ENCODE measurements at regions of chr14 and their contacts with region 1.

Region 1: DNA sequence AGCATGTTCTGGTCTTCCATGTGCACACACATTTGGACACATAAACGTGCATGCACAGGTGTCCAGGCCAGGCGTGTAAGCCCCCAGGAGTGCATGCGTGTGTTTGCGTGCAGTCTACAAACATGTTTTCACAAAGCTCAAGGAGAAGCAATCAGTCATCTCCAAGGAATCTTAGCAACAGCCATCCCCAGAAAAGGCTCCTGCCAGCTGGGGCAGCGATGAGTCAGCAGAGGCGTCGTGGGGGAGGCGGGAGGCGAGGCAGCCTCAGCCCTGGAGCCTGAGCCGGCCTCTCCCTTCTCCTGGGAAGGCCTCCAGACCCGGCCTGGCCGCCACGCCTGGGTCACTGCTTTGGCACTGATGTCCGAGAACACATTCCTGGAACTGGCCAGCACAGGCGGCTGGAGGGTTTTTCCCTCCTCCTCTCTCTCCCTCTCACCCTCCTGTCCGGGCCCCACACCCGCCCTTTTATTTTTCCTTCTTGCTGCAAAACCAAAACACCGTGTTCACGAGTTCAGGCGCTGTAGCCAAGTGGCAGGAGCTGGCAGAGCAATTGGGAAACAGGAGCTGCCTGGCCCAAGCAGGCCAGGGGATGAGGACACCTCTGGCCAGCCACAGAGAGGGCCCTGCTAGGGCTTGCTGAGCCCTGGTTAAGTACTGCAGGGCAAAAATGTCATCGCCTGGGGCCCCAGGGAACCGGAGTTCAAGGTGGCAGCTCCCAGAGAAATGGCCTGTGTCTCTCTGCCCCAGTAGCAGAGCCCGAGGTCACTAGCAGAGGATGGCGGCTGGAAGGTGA is 92.7 kb downstream of the LRRC74A start:
- DNase-seq: no peak
- H3K4me3 ChIP-seq: no peak overlapping the region
- H3K4me3 Mint-ChIP-seq: peak overlapping the region in 1 of 8 donors; percentile 15
- H3K27ac ChIP-seq: no peak overlapping the region
- H3K27ac Mint-ChIP-seq: peak overlapping the region in 2 of 7 donors; percentile 46 to 57
- H3K4me1 ChIP-seq: peaks cover 32% of the 10 kb centered on the region
- H3K4me1 Mint-ChIP-seq: peaks cover 18 to 59% (median 43%) of the 10 kb centered on the region in 4 donors
- H3K27me3 ChIP-seq: no peaks in the 10 kb centered on the region
- H3K27me3 Mint-ChIP-seq: no peaks in the 10 kb centered on the region

Region 2: GRCh38 chr14:76931631-76932402 is 12.9 kb after region 1 on chr14:
- CTCF ChIA-PET with region 1: interaction called, 39 read pairs
- POLR2A ChIA-PET with region 1: interaction called, 22 read pairs
- intact Hi-C with region 1: no loop called
- DNase-seq: no peak
- H3K4me3 ChIP-seq: no peak overlapping the region
- H3K4me3 Mint-ChIP-seq: peak overlapping the region in 6 of 8 donors; percentile 37 to 79 (median 61)
- H3K27ac ChIP-seq: no peak overlapping the region
- H3K27ac Mint-ChIP-seq: peak overlapping the region; percentile 83 to 97 (median 94)
- H3K4me1 ChIP-seq: peaks cover 61% of the 10 kb centered on the region
- H3K4me1 Mint-ChIP-seq: peaks cover 55 to 70% (median 61%) of the 10 kb centered on the region in 4 donors
- H3K27me3 ChIP-seq: no peaks in the 10 kb centered on the region
- H3K27me3 Mint-ChIP-seq: no peaks in the 10 kb centered on the region

Region 3: DNA sequence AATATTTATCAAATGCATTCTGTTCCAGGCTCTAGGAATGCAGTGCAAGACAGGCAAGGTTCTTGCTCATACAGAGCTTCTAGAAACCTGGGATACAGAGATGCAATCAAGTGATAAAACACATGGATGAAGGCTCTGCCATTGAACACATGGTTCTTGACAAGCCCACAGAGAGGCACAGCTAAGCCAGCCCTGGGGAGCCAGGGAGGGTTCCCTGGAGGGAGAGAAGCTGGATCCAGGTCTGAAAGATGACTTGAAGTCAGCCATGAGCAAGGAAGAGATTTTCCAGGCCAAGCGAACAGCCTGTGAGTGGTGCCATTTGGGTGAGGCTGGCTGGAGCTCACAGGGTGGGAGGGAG is 43.3 kb after region 1 on chr14:
- CTCF ChIA-PET with region 1: interaction called, 33 read pairs
- POLR2A ChIA-PET with region 1: interaction called, 12 read pairs
- intact Hi-C with region 1: no loop called
- DNase-seq: no peak
- H3K4me3 ChIP-seq: peak overlapping the region; percentile 48 to 61
- H3K4me3 Mint-ChIP-seq: peak overlapping the region; percentile 73 to 93 (median 86)
- H3K27ac ChIP-seq: peak overlapping the region; percentile 81
- H3K27ac Mint-ChIP-seq: peak overlapping the region; percentile 87 to 100 (median 97)
- H3K4me1 ChIP-seq: peaks cover 78% of the 10 kb centered on the region
- H3K4me1 Mint-ChIP-seq: peaks cover 50 to 79% (median 63%) of the 10 kb centered on the region in 4 donors
- H3K27me3 ChIP-seq: no peaks in the 10 kb centered on the region
- H3K27me3 Mint-ChIP-seq: no peaks in the 10 kb centered on the region

Region 4: GRCh38 chr14:77033622-77034521 is 114.9 kb after region 1 on chr14:
- CTCF ChIA-PET with region 1: interaction called, 18 read pairs
- POLR2A ChIA-PET with region 1: interaction called, 22 read pairs
- intact Hi-C with region 1: no loop called
- DNase-seq: peak; percentile 63 to 90 (median 72)
- H3K4me3 ChIP-seq: peak overlapping the region; percentile 71 to 84
- H3K4me3 Mint-ChIP-seq: peak overlapping the region; percentile 91 to 94 (median 92)
- H3K27ac ChIP-seq: peak overlapping the region; percentile 98
- H3K27ac Mint-ChIP-seq: peak overlapping the region; percentile 94 to 99 (median 98)
- H3K4me1 ChIP-seq: peaks cover 93% of the 10 kb centered on the region
- H3K4me1 Mint-ChIP-seq: peaks cover 53 to 87% (median 70%) of the 10 kb centered on the region in 4 donors
- H3K27me3 ChIP-seq: no peaks in the 10 kb centered on the region
- H3K27me3 Mint-ChIP-seq: no peaks in the 10 kb centered on the region

Region 5: GRCh38 chr14:77059276-77059915 is 140.4 kb after region 1 on chr14:
- CTCF ChIA-PET with region 1: interaction called, 360 read pairs
- POLR2A ChIA-PET with region 1: interaction called, 38 read pairs
- intact Hi-C with region 1: no loop called
- DNase-seq: peak in 3 of 5 donors; percentile 17 to 51 (median 47)
- H3K4me3 ChIP-seq: no peak overlapping the region
- H3K4me3 Mint-ChIP-seq: no peak overlapping the region
- H3K27ac ChIP-seq: no peak overlapping the region
- H3K27ac Mint-ChIP-seq: peak overlapping the region in 2 of 7 donors; percentile 10 to 50
- H3K4me1 ChIP-seq: peaks cover 19% of the 10 kb centered on the region
- H3K4me1 Mint-ChIP-seq: peaks cover 11 to 19% (median 15%) of the 10 kb centered on the region in 4 donors
- H3K27me3 ChIP-seq: no peaks in the 10 kb centered on the region
- H3K27me3 Mint-ChIP-seq: no peaks in the 10 kb centered on the region